ENCODE measurements at regions of chr10 and their contacts with region 1.

Region 1: GRCh38 chr10:119644205-119644814 is 6.9 kb upstream of the BAG3 start:
- DNase-seq: no peak
- H3K4me3 ChIP-seq: no peak overlapping the region
- CTCF ChIP-seq: peak; percentile 52

Region 2: GRCh38 chr10:119575506-119575905 is 68.8 kb before region 1 on chr10:
- CTCF ChIA-PET with region 1: no interaction called
- POLR2A ChIA-PET with region 1: no interaction called
- DNase-seq: no peak
- H3K4me3 ChIP-seq: no peak overlapping the region
- CTCF ChIP-seq: no peak

Region 3: DNA sequence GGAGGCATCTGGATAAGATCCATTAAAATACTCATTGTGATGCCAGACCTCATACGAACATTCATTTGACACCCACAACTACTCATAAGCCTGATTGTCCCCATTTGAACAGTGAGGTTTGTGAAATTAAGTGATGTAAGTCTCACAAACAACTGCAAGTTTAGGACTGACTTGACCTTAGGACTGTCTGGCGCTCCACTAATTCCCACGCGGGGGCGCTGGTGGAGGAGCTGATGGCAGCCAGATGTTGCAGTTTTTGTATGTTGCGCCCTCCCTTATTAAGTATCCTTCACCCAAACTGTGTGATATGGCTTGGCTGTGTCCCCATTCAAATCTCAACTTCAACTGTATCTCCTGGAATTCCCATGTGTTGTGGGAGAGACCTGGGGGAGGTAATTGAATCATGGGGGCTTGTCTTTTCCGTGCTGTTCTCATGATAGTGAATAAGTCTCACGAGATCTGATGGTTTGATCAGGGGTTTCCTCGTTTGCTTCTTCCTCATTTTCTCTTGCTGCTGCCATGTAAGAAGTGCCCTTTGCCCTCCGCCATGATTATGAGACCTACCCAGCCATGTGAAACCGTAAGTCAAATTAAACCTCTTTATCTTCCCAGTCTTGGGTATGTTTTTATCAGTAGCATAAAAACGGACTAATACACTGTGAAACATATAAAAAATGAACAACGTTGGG is 27.3 kb before region 1 on chr10:
- CTCF ChIA-PET with region 1: interaction called, 16 read pairs
- POLR2A ChIA-PET with region 1: no interaction called
- DNase-seq: no peak
- H3K4me3 ChIP-seq: no peak overlapping the region
- CTCF ChIP-seq: peak; percentile 54

Region 4: GRCh38 chr10:119634219-119634544 is 10.1 kb before region 1 on chr10:
- CTCF ChIA-PET with region 1: interaction called, 16 read pairs
- POLR2A ChIA-PET with region 1: no interaction called
- DNase-seq: no peak
- H3K4me3 ChIP-seq: no peak overlapping the region
- CTCF ChIP-seq: no peak

Region 5: DNA sequence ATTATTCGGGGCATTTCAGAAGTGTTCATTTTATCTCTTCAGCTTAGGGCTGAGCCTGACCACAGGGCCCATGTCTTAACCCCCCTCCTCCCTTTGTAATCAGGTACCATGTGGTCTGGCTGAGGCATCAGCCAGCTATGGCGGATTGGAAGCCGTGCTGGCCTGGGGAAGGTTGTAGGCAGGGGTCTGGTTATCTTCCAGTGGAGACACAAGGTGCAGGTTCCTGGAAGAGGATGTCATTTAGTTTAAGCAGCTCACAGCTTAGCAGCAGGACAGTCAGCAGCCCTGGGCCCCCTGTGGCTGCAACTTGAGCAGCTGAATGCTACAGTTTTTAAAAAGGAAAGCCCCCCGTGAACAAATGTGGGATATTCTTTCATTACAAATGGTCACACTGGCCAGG is 29.0 kb after region 1 on chr10:
- CTCF ChIA-PET with region 1: no interaction called
- POLR2A ChIA-PET with region 1: no interaction called
- DNase-seq: no peak
- H3K4me3 ChIP-seq: no peak overlapping the region
- CTCF ChIP-seq: no peak

Region 6: DNA sequence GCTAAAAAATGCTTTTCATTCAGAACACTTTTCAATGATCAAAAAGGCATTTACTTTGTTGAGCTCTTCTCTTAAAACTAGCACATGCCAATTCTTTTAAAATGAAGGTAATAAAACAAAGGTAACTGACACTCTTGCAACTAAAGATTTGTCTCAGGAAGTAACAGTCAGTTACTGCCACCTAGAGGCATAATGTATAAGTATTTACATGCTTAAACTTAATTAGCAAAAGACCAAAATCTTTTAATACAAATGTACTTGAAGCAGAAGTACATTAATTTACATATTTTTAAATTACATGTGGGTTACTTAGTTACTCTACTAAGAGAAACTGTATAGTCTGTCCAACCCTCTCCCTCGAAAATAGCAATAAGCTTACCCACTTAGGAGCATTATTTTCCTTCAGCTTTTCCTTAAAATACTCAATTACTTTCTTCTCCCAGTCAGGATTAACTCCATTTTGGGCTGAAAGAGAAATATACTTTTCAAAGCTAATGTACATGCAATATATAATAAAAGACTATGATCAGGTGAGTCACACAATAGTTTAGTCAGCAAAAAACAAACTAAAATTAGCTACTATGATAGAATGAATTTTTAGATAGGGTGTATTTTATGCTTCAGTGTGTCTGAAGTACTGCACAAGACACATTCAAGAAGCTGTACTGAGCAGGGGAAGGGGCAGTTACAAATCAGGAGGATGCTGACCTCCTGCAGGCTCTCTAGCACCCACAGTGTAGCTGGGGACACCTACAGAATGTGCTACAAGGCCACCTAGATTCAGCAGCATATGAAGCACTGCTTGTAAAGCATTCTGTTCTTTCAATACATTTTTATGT is 215.3 kb after region 1 on chr10:
- CTCF ChIA-PET with region 1: no interaction called
- POLR2A ChIA-PET with region 1: no interaction called
- DNase-seq: no peak
- H3K4me3 ChIP-seq: no peak overlapping the region
- CTCF ChIP-seq: peak; percentile 18

Region 7: GRCh38 chr10:120098232-120098930 is 454.1 kb after region 1 on chr10:
- CTCF ChIA-PET with region 1: no interaction called
- POLR2A ChIA-PET with region 1: no interaction called
- DNase-seq: no peak
- H3K4me3 ChIP-seq: no peak overlapping the region
- CTCF ChIP-seq: no peak